RWPE1 (cell line): ENCODE measurements at regions of chr6 and their contacts with region 1.

Region 1: DNA sequence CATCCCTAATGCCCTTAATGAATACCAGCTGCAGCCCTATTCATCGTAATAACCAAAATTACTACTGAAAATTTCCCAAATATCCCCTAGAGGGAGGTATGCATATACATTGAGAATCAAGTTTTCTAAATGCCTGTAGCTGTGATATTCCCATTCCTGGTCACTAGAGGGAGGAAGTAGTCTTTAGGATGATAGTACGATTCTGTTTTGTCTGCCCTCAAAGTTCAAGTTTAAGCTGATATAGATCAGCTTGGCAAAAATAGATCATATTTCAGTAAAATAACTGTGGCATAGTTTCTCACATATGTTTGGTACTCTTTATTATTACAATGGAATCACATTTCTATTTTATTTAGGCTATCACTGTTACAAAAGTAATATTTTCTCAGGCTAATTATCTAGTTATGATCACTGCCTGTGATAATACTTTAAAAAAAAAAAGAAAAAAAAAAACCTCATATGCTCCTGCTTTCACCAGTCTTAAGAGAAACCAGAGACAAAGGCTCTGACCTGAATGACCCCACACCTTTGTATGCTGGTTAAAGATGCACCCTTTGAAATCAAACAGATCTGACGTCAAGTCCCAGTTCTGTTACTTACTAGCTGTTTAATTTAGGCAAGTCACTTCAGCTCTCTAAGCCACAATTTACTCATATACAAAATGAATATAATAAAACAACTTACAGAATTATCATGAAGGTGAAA is 11.0 kb downstream of the TSPYL1 start:
- DNase-seq: peak; percentile 68
- H3K27ac ChIP-seq: no peak overlapping the region
- CTCF ChIP-seq: peak; percentile 94

Region 2: GRCh38 chr6:116279260-116280063 is 10.7 kb after region 1 on chr6 and contains the start of gene TSPYL1:
- CTCF ChIA-PET with region 1: interaction called, 23 read pairs
- POLR2A ChIA-PET with region 1: no interaction called
- DNase-seq: peak; percentile 95
- H3K27ac ChIP-seq: peak within 1 kb of the TSS; percentile 97
- CTCF ChIP-seq: no peak

Region 3: GRCh38 chr6:116531675-116532570 is 263.2 kb after region 1 on chr6:
- CTCF ChIA-PET with region 1: interaction called, 13 read pairs
- POLR2A ChIA-PET with region 1: no interaction called
- DNase-seq: peak; percentile 57
- H3K27ac ChIP-seq: no peak overlapping the region
- CTCF ChIP-seq: peak; percentile 64

Region 4: GRCh38 chr6:116561377-116562018 is 292.8 kb after region 1 on chr6:
- CTCF ChIA-PET with region 1: interaction called, 11 read pairs
- POLR2A ChIA-PET with region 1: interaction called, 3 read pairs
- DNase-seq: peak; percentile 40
- H3K27ac ChIP-seq: no peak overlapping the region
- CTCF ChIP-seq: peak; percentile 91